Naive thymus-derived CD4-positive, alpha-beta T cell (primary cell): ENCODE measurements at regions of chr4 and their contacts with region 1.

Region 1: GRCh38 chr4:86961605-86962295 is 26.9 kb downstream of the AFF1 start:
- DNase-seq: peak in 1 of 9 donors; percentile 28
- ATAC-seq: peak; percentile 83
- H3K4me3 ChIP-seq: no peak overlapping the region
- H3K4me3 Mint-ChIP-seq: peak overlapping the region in 9 of 10 donors; percentile 7 to 61 (median 51)
- H3K27ac ChIP-seq: no peak overlapping the region
- H3K27ac Mint-ChIP-seq: peak overlapping the region in 6 of 9 donors; percentile 4 to 69 (median 16)
- H3K4me1 ChIP-seq: peaks cover 0 to 7% of the 10 kb centered on the region in 2 donors
- H3K4me1 Mint-ChIP-seq: peaks cover 10 to 53% (median 37%) of the 10 kb centered on the region in 7 donors
- H3K27me3 ChIP-seq: no peaks in the 10 kb centered on the region
- H3K27me3 Mint-ChIP-seq: no peaks in the 10 kb centered on the region

Region 2: GRCh38 chr4:86993909-86994681 is 32.3 kb after region 1 on chr4:
- CTCF ChIA-PET with region 1: no interaction called
- POLR2A ChIA-PET with region 1: interaction called, 3 read pairs
- intact Hi-C with region 1: loop called in 1 of 2 experiments (anchors 5 kb)
- DNase-seq: no peak
- ATAC-seq: no peak
- H3K4me3 ChIP-seq: no peak overlapping the region
- H3K4me3 Mint-ChIP-seq: no peak overlapping the region
- H3K27ac ChIP-seq: no peak overlapping the region
- H3K27ac Mint-ChIP-seq: peak overlapping the region in 1 of 9 donors; percentile 52
- H3K4me1 ChIP-seq: no peaks in the 10 kb centered on the region
- H3K4me1 Mint-ChIP-seq: peaks cover 7 to 23% (median 15%) of the 10 kb centered on the region in 7 donors
- H3K27me3 ChIP-seq: no peaks in the 10 kb centered on the region
- H3K27me3 Mint-ChIP-seq: no peaks in the 10 kb centered on the region